CD4-positive, alpha-beta memory T cell (primary cell): ENCODE measurements at regions of chr11 and their contacts with region 1.

Region 1: GRCh38 chr11:59810189-59810910 is at the start of gene MRPL16:
- DNase-seq: peak; percentile 84 to 91 (median 86)
- H3K4me3 ChIP-seq: peak within 1 kb of the TSS; percentile 70 to 91
- H3K4me3 Mint-ChIP-seq: peak within 1 kb of the TSS; percentile 92 to 95 (median 93)
- H3K27ac ChIP-seq: peak within 1 kb of the TSS; percentile 71
- H3K27ac Mint-ChIP-seq: peak within 1 kb of the TSS; percentile 87 to 97 (median 91)
- H3K4me1 ChIP-seq: peaks cover 23% of the 10 kb centered on the region
- H3K4me1 Mint-ChIP-seq: peaks cover 14 to 32% (median 23%) of the 10 kb centered on the region in 4 donors
- H3K27me3 ChIP-seq: no peaks in the 10 kb centered on the region
- H3K27me3 Mint-ChIP-seq: peaks cover 0 to 2% of the 10 kb centered on the region in 2 donors
- total RNA-seq, gene MRPL16: 33.2 to 35.9 TPM

Region 2: DNA sequence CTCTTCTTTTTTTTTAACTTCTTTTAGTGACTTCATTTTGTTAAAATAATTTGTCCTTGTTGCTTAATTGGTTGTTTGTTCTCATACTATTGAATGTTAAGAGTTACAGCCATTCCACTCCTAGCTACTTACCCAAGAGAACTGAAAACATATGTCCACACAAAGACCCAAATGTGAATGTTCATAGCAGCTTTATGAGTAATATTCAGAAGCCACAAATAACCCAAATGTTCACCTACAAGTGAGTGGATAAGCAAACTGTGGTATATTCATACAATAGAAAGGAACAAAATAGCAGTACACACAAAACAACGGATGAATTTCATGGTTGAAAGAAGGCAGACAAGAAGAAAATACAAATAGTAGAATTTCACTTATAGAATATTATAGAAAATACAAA is 308.4 kb before region 1 on chr11:
- CTCF ChIA-PET with region 1: no interaction called
- POLR2A ChIA-PET with region 1: no interaction called
- intact Hi-C with region 1: no loop called
- DNase-seq: no peak
- H3K4me3 ChIP-seq: no peak overlapping the region
- H3K4me3 Mint-ChIP-seq: no peak overlapping the region
- H3K27ac ChIP-seq: no peak overlapping the region
- H3K27ac Mint-ChIP-seq: no peak overlapping the region
- H3K4me1 ChIP-seq: no peaks in the 10 kb centered on the region
- H3K4me1 Mint-ChIP-seq: peaks cover 0 to 2% (median 0%) of the 10 kb centered on the region in 4 donors
- H3K27me3 ChIP-seq: no peaks in the 10 kb centered on the region
- H3K27me3 Mint-ChIP-seq: peaks cover 17 to 19% of the 10 kb centered on the region in 2 donors

Region 3: GRCh38 chr11:59767225-59767611 is 43.1 kb before region 1 on chr11:
- CTCF ChIA-PET with region 1: interaction called, 4 read pairs
- POLR2A ChIA-PET with region 1: interaction called, 10 read pairs
- intact Hi-C with region 1: no loop called
- DNase-seq: peak; percentile 58 to 66 (median 64)
- H3K4me3 ChIP-seq: no peak overlapping the region
- H3K4me3 Mint-ChIP-seq: peak overlapping the region in 4 of 8 donors; percentile 52 to 67 (median 59)
- H3K27ac ChIP-seq: no peak overlapping the region
- H3K27ac Mint-ChIP-seq: peak overlapping the region in 6 of 7 donors; percentile 4 to 84 (median 18)
- H3K4me1 ChIP-seq: peaks cover 54% of the 10 kb centered on the region
- H3K4me1 Mint-ChIP-seq: peaks cover 15 to 34% (median 27%) of the 10 kb centered on the region in 4 donors
- H3K27me3 ChIP-seq: no peaks in the 10 kb centered on the region
- H3K27me3 Mint-ChIP-seq: peaks cover 0 to 2% of the 10 kb centered on the region in 2 donors

Region 4: GRCh38 chr11:59833602-59834001 is 23.3 kb after region 1 on chr11:
- CTCF ChIA-PET with region 1: no interaction called
- POLR2A ChIA-PET with region 1: no interaction called
- intact Hi-C with region 1: no loop called
- DNase-seq: no peak
- H3K4me3 ChIP-seq: no peak overlapping the region
- H3K4me3 Mint-ChIP-seq: no peak overlapping the region
- H3K27ac ChIP-seq: no peak overlapping the region
- H3K27ac Mint-ChIP-seq: no peak overlapping the region
- H3K4me1 ChIP-seq: no peaks in the 10 kb centered on the region
- H3K4me1 Mint-ChIP-seq: peaks cover 0 to 1% (median 0%) of the 10 kb centered on the region in 4 donors
- H3K27me3 ChIP-seq: no peaks in the 10 kb centered on the region
- H3K27me3 Mint-ChIP-seq: peaks cover 0 to 7% of the 10 kb centered on the region in 2 donors